ENCODE measurements at regions of chr1 and their contacts with region 1.

Region 1: DNA sequence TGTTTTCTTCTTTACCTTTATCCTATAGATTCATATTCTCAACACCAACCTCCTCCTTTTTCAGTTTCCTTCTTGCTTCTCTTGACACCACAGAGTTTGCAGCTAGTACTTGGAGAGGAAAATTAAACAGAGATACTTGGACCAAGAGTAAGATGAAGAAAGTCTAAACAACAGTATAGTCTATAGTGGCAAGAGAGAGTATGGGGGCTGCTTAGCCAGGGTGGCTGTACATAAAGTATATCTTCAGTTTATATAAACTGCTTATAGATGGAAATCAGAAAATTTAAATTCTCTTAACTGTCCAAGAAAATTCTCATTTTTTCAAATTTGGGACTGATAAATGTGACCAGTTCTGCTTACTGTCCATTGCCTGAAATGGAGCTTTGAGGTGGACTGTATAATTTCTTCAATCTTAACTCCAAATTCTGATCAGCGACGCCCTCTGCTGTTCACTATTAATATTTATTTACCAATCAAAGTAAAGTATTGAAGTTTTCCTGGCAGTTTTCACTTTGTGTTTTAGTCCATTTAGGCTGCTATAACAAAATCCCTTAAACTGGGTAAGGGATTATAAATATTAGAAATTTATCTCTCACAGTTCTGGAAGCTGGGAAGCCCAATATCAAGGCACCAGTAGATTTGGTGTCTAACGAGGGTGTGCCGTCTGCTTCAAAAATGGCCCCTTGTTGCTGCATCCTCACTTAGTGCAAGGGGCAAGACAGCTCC is 14.8 kb upstream of the METTL18 start:
- DNase-seq: peak; percentile 35
- H3K4me3 Mint-ChIP-seq: no peak overlapping the region
- H3K27ac Mint-ChIP-seq: no peak overlapping the region
- H3K4me1 Mint-ChIP-seq: no peaks in the 10 kb centered on the region
- H3K27me3 Mint-ChIP-seq: no peaks in the 10 kb centered on the region
- CTCF ChIP-seq: peak; percentile 71

Region 2: GRCh38 chr1:169466259-169467230 is 343.0 kb before region 1 on chr1:
- CTCF ChIA-PET with region 1: no interaction called
- intact Hi-C with region 1: loop called (anchors 10 kb)
- DNase-seq: peak; percentile 56
- H3K4me3 Mint-ChIP-seq: no peak overlapping the region
- H3K27ac Mint-ChIP-seq: no peak overlapping the region
- H3K4me1 Mint-ChIP-seq: peaks cover 2% of the 10 kb centered on the region
- H3K27me3 Mint-ChIP-seq: no peaks in the 10 kb centered on the region
- CTCF ChIP-seq: peak; percentile 59

Region 3: GRCh38 chr1:169601093-169601881 is 208.2 kb before region 1 on chr1:
- CTCF ChIA-PET with region 1: interaction called, 11 read pairs
- intact Hi-C with region 1: loop called (anchors 1 kb)
- DNase-seq: no peak
- H3K4me3 Mint-ChIP-seq: no peak overlapping the region
- H3K27ac Mint-ChIP-seq: no peak overlapping the region
- H3K4me1 Mint-ChIP-seq: peaks cover 22% of the 10 kb centered on the region
- H3K27me3 Mint-ChIP-seq: no peaks in the 10 kb centered on the region
- CTCF ChIP-seq: peak; percentile 46

Region 4: DNA sequence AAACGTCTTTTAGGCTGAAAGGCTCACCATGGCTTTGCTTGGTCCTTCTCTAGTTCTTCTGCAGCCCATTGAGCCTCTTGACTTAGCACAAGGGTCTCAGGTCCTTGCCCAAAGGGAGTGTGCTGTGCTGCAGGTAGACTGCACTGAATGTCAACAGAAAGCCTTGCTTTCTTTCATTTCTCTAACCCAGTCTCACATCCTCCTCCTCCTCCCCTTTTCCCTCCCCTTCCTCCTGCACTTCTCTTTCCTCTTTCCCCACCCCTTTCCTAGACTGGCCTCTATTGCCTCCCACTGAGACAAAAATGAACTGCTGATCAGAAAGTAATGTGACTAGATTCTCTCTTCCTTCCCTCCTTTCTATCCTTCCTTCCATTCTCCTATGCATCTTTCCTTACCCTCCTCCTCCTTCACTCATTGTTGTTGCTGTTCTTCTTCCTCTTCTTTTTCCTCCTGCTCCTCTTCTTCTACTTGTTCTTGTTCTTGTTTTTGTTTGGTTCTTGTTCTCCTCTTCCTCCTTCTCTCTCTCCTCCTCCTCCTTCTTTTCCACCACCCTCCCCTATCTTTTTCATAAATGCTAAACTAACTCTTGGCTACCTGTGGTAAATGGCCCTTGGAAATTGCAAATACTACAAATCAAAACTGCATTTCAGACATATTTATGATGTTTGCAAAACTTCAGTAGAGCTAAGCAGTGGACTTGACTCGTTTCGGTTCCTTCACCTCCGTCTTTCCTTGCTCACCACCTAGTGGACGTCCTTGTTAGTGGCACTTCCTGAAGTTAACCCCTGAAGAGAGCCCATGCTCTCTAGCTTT is 97.9 kb before region 1 on chr1 and contains the start of gene SELL:
- CTCF ChIA-PET with region 1: interaction called, 11 read pairs
- intact Hi-C with region 1: loop called (anchors 5 kb)
- DNase-seq: peak; percentile 84
- H3K4me3 Mint-ChIP-seq: peak within 1 kb of the TSS; percentile 41
- H3K27ac Mint-ChIP-seq: peak within 1 kb of the TSS; percentile 19
- H3K4me1 Mint-ChIP-seq: peaks cover 10% of the 10 kb centered on the region
- H3K27me3 Mint-ChIP-seq: peaks cover 11% of the 10 kb centered on the region
- CTCF ChIP-seq: peak; percentile 85
- total RNA-seq, gene SELL: 6.2 and 12.1 TPM in 2 replicates

Region 5: DNA sequence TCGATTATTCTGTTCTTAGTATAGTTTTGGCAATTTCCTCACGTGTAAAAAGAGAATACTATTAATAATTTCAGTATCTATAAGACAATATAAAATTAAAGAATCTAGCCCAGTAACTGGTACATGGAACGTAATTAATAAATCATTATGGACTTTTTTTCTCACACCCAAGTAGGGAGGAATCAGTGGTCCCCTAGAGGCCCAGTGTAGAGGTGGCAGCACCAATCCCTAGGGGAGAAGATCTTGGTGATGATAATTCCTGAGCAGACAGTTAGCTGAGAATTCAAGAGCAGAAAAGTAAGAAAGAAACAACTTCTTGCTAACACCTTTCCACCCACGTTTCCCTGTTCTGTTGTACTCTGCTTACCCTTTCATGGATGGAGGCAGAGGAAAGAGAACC is 56.0 kb before region 1 on chr1:
- CTCF ChIA-PET with region 1: no interaction called
- intact Hi-C with region 1: loop called (anchors 2 kb)
- DNase-seq: no peak
- H3K4me3 Mint-ChIP-seq: no peak overlapping the region
- H3K27ac Mint-ChIP-seq: no peak overlapping the region
- H3K4me1 Mint-ChIP-seq: no peaks in the 10 kb centered on the region
- H3K27me3 Mint-ChIP-seq: no peaks in the 10 kb centered on the region
- CTCF ChIP-seq: no peak

Region 6: GRCh38 chr1:169779980-169780379 is 29.6 kb before region 1 on chr1:
- CTCF ChIA-PET with region 1: interaction called, 3 read pairs
- intact Hi-C with region 1: loop called (anchors 2 kb)
- DNase-seq: peak; percentile 18
- H3K4me3 Mint-ChIP-seq: no peak overlapping the region
- H3K27ac Mint-ChIP-seq: peak overlapping the region; percentile 28
- H3K4me1 Mint-ChIP-seq: peaks cover 55% of the 10 kb centered on the region
- H3K27me3 Mint-ChIP-seq: no peaks in the 10 kb centered on the region
- CTCF ChIP-seq: no peak

Region 7: DNA sequence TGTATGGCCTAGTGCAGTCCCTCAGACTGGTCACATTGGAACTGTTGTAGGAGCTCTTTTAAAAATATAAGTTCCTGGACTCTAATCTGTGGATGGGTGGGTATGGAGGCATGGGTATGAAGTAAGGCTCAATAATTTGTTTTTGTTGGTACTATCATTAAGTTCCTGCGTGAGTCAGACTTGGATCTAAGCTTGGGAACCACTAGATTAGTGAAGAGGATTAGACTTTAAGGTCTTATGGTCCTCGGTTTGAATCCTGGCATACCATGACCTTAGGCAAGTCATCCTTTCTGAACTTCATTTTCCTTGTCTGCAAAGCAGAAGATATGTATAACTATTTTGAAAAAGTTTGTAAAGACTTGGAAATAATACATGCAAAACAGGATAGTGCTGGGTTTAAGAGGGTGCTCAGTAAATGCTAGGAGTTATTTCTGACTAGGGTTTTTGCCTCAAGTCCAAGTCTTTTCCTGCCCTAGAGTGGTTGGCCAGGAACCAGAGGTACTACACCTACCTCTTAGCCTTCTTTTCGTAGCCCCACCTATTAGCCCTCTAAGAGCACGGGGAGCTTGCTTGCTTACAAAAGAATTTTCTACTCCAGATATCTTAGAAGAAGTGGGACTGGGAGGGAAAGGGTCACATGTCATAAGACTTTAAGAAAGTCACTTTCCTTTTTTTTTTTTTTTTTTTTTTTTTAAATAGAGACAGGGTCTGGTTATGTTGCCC is 23.8 kb after region 1 on chr1:
- CTCF ChIA-PET with region 1: no interaction called
- intact Hi-C with region 1: no loop called
- DNase-seq: no peak
- H3K4me3 Mint-ChIP-seq: no peak overlapping the region
- H3K27ac Mint-ChIP-seq: no peak overlapping the region
- H3K4me1 Mint-ChIP-seq: no peaks in the 10 kb centered on the region
- H3K27me3 Mint-ChIP-seq: no peaks in the 10 kb centered on the region
- CTCF ChIP-seq: no peak

Measured in Calu3 (cell line).